CD4-positive, alpha-beta T cell (primary cell): ENCODE measurements at regions of chr14 and their contacts with region 1.

Region 1: DNA sequence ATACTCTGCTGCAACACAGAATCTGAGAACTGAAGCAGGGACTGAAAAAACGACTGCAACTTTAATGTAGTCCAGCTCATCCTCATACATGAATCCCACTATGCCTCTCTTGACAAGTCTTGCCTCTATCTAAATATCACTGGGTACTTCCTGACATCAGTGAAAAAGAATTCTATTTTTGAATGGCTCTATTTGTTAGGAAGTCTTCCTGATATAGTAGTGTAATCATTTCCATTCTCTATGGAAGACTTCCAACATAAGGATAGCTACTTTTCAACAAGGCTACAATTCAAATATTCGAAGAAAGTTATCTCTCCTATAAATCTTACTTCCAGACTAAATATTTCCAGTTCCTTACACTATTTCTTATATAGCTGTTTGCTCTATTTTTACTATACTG is 167.5 kb downstream of the MDGA2 start:
- DNase-seq: no peak
- ATAC-seq: no peak
- H3K4me3 ChIP-seq: no peak overlapping the region
- H3K4me3 Mint-ChIP-seq: no peak overlapping the region
- H3K27ac ChIP-seq: no peak overlapping the region
- H3K27ac Mint-ChIP-seq: no peak overlapping the region
- H3K4me1 ChIP-seq: no peaks in the 10 kb centered on the region
- H3K4me1 Mint-ChIP-seq: no peaks in the 10 kb centered on the region
- H3K27me3 ChIP-seq: no peaks in the 10 kb centered on the region
- H3K27me3 Mint-ChIP-seq: no peaks in the 10 kb centered on the region
- CTCF ChIP-seq: no peak

Region 2: GRCh38 chr14:47549886-47550285 is 42.0 kb after region 1 on chr14:
- CTCF ChIA-PET with region 1: no interaction called
- POLR2A ChIA-PET with region 1: no interaction called
- intact Hi-C with region 1: loop called in 1 of 2 experiments (anchors 2 kb)
- DNase-seq: no peak
- ATAC-seq: no peak
- H3K4me3 ChIP-seq: no peak overlapping the region
- H3K4me3 Mint-ChIP-seq: no peak overlapping the region
- H3K27ac ChIP-seq: no peak overlapping the region
- H3K27ac Mint-ChIP-seq: no peak overlapping the region
- H3K4me1 ChIP-seq: no peaks in the 10 kb centered on the region
- H3K4me1 Mint-ChIP-seq: no peaks in the 10 kb centered on the region
- H3K27me3 ChIP-seq: no peaks in the 10 kb centered on the region
- H3K27me3 Mint-ChIP-seq: no peaks in the 10 kb centered on the region
- CTCF ChIP-seq: no peak

Region 3: GRCh38 chr14:47596232-47596631 is 88.4 kb after region 1 on chr14:
- CTCF ChIA-PET with region 1: no interaction called
- POLR2A ChIA-PET with region 1: no interaction called
- intact Hi-C with region 1: no loop called
- DNase-seq: no peak
- ATAC-seq: no peak
- H3K4me3 ChIP-seq: no peak overlapping the region
- H3K4me3 Mint-ChIP-seq: no peak overlapping the region
- H3K27ac ChIP-seq: no peak overlapping the region
- H3K27ac Mint-ChIP-seq: no peak overlapping the region
- H3K4me1 ChIP-seq: no peaks in the 10 kb centered on the region
- H3K4me1 Mint-ChIP-seq: no peaks in the 10 kb centered on the region
- H3K27me3 ChIP-seq: no peaks in the 10 kb centered on the region
- H3K27me3 Mint-ChIP-seq: no peaks in the 10 kb centered on the region
- CTCF ChIP-seq: no peak

Region 4: GRCh38 chr14:48323665-48324064 is 815.8 kb after region 1 on chr14:
- CTCF ChIA-PET with region 1: no interaction called
- POLR2A ChIA-PET with region 1: no interaction called
- intact Hi-C with region 1: no loop called
- DNase-seq: no peak
- ATAC-seq: no peak
- H3K4me3 ChIP-seq: no peak overlapping the region
- H3K4me3 Mint-ChIP-seq: no peak overlapping the region
- H3K27ac ChIP-seq: no peak overlapping the region
- H3K27ac Mint-ChIP-seq: no peak overlapping the region
- H3K4me1 ChIP-seq: no peaks in the 10 kb centered on the region
- H3K4me1 Mint-ChIP-seq: no peaks in the 10 kb centered on the region
- H3K27me3 ChIP-seq: no peaks in the 10 kb centered on the region
- H3K27me3 Mint-ChIP-seq: no peaks in the 10 kb centered on the region
- CTCF ChIP-seq: no peak